Pancreas (tissue), 10 donors: ENCODE measurements at regions of chr1 and their contacts with region 1.

Region 1: GRCh38 chr1:203124546-203125317 is 2.8 kb upstream of the ADORA1 start:
- DNase-seq: no peak
- ATAC-seq: no peak
- H3K4me3 ChIP-seq: no peak overlapping the region
- H3K27ac ChIP-seq: no peak overlapping the region
- H3K4me1 ChIP-seq: peaks cover 8 to 11% (median 8%) of the 10 kb centered on the region in 3 donors
- H3K27me3 ChIP-seq: peaks cover 0 to 3% (median 0%) of the 10 kb centered on the region in 4 donors
- CTCF ChIP-seq: no peak

Region 2: GRCh38 chr1:202926720-202927491 is 197.8 kb before region 1 on chr1 and contains the start of gene KLHL12:
- intact Hi-C with region 1: no loop called
- DNase-seq: peak; percentile 95 to 99 (median 97)
- ATAC-seq: peak; percentile 96 to 99 (median 98)
- H3K4me3 ChIP-seq: peak within 1 kb of the TSS; percentile 53 to 91 (median 62)
- H3K27ac ChIP-seq: peak within 1 kb of the TSS; percentile 92 to 97 (median 94)
- H3K4me1 ChIP-seq: peaks cover 0 to 10% (median 8%) of the 10 kb centered on the region in 3 donors
- H3K27me3 ChIP-seq: no peaks in the 10 kb centered on the region
- CTCF ChIP-seq: peak; percentile 13 to 34 (median 24)
- total RNA-seq, gene KLHL12: 10.2 to 17.8 (median 11.7) TPM

Region 3: DNA sequence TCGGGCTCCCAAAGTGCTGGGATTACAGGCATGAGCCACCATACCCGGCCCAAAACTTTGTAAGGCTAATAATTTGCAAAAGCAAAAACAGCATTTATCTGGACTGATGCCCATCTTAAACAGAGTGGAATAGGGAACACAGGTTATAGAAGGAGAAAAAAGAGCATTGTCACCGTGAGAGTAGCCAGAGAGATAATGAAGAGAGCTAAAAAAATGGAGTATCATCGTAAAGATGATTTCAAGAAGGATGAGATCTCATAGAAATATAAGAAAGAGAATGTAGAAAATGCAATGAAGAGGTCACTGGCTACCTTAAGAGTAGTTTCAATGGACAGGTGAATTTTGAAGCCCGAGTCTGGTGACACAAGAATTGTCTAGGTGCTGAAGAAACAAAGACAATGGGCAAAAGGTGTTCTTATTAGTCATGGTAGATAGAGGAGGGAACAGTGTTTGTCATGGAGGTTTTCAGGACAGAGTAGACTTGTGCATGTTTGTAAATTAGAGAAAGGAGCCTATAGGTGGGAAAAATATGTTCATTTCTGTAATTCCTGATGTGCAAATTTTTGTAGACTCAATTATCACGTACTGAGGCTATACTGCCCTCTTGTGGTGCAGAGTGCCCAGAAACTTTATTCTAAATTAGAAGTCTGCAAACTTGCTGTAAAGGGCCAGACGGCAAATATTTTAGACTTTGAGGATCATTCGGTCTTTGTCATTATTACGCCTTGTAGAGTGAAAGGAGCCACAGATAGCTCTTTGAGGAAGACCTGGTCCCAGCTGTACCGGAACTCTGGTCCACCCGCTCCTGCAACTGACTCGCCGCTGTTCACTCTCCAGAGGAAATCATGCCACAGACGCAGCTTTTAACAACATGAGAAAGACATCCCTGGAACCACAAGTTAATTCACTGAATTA is 125.6 kb before region 1 on chr1:
- intact Hi-C with region 1: no loop called
- DNase-seq: peak in 3 of 6 donors; percentile 25 to 60 (median 41)
- ATAC-seq: peak in 3 of 4 donors; percentile 73 to 86 (median 81)
- H3K4me3 ChIP-seq: no peak overlapping the region
- H3K27ac ChIP-seq: no peak overlapping the region
- H3K4me1 ChIP-seq: no peaks in the 10 kb centered on the region
- H3K27me3 ChIP-seq: no peaks in the 10 kb centered on the region
- CTCF ChIP-seq: peak; percentile 38 to 76 (median 71)

Region 4: DNA sequence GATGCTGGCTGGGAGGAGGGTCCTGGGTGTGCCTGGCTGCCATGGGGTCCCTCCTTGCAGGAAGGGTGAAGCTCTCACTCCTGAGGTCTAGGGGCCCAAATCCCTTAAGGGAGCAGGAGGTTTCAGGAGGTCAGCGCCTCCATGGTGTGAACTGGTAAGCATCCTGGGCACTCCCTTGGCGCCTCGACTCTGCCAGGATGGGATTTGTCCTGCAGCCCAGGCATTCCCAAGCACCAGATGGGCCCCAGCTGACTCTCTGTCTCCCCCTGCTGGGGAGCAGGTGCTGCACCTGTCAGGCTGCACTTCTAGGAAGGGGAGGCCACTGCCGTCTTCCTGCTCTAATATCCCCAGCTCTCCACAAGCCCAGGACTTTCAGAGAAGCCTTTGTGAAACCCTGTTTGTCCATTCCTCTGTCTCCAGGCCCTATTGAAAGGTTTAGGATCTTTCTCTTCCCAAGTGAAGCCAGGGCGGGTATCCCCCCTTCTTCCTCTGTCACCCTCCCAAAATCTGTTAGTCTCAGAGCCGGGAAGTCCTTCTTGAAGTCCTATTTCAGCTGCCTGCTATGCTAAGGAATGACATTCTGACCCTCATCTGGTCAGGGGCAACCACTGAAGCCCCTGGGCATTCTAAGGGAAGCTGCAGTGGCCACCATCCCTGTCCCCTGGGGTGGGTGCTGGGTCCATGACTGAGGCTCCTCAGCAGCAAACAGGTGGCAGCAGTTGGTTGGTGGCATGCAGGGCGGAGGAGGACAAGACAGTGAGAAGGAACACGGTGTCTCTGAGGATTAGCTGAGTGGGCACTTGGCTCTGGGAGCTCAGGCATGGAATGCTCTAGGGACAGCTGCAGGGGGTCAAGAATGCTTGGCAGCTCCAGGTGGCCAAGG is 47.6 kb after region 1 on chr1:
- intact Hi-C with region 1: loop called in 2 of 3 experiments (anchors 5 kb)
- DNase-seq: peak; percentile 53 to 91 (median 81)
- ATAC-seq: peak; percentile 77 to 89 (median 83)
- H3K4me3 ChIP-seq: no peak overlapping the region
- H3K27ac ChIP-seq: no peak overlapping the region
- H3K4me1 ChIP-seq: no peaks in the 10 kb centered on the region
- H3K27me3 ChIP-seq: no peaks in the 10 kb centered on the region
- CTCF ChIP-seq: peak; percentile 85 to 95 (median 89)

Region 5: GRCh38 chr1:203189951-203190352 is 65.2 kb after region 1 on chr1:
- intact Hi-C with region 1: no loop called
- DNase-seq: peak in 1 of 6 donors; percentile 25
- ATAC-seq: no peak
- H3K4me3 ChIP-seq: no peak overlapping the region
- H3K27ac ChIP-seq: no peak overlapping the region
- H3K4me1 ChIP-seq: no peaks in the 10 kb centered on the region
- H3K27me3 ChIP-seq: no peaks in the 10 kb centered on the region
- CTCF ChIP-seq: no peak